Psoas muscle (tissue), 8 donors: ENCODE measurements at regions of chr5 and their contacts with region 1.

Region 1: GRCh38 chr5:146049014-146049703 is 56.2 kb downstream of the PLAC8L1 start:
- DNase-seq: no peak
- ATAC-seq: peak; percentile 55 to 83 (median 74)
- H3K4me3 ChIP-seq: no peak overlapping the region
- H3K27ac ChIP-seq: no peak overlapping the region
- H3K4me1 ChIP-seq: no peaks in the 10 kb centered on the region
- H3K27me3 ChIP-seq: peaks cover 0 to 4% (median 0%) of the 10 kb centered on the region in 3 donors
- CTCF ChIP-seq: peak; percentile 65

Region 2: DNA sequence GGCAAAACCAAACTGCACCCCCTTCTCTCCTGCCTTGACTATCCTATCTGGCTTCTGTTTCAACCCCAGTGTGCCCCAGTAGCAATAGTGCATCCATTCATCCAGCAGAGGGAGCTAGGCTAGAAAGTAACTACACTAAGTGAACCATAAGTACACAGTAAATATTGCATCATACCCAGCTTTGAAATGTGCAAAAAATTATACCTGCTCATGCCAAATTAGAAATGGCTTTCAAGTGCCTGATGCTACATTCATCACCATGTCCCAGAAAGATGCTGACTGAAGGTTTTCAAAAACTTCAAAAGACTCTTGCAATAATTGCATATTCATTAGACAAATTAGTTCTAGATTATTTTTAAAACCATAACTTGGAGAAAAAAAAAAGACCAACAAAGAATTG is 367.5 kb before region 1 on chr5:
- intact Hi-C with region 1: loop called (anchors 5 to 10 kb)
- DNase-seq: no peak
- ATAC-seq: peak; percentile 65 to 95 (median 84)
- H3K4me3 ChIP-seq: no peak overlapping the region
- H3K27ac ChIP-seq: no peak overlapping the region
- H3K4me1 ChIP-seq: peaks cover 8% of the 10 kb centered on the region
- H3K27me3 ChIP-seq: no peaks in the 10 kb centered on the region
- CTCF ChIP-seq: peak; percentile 65

Region 3: DNA sequence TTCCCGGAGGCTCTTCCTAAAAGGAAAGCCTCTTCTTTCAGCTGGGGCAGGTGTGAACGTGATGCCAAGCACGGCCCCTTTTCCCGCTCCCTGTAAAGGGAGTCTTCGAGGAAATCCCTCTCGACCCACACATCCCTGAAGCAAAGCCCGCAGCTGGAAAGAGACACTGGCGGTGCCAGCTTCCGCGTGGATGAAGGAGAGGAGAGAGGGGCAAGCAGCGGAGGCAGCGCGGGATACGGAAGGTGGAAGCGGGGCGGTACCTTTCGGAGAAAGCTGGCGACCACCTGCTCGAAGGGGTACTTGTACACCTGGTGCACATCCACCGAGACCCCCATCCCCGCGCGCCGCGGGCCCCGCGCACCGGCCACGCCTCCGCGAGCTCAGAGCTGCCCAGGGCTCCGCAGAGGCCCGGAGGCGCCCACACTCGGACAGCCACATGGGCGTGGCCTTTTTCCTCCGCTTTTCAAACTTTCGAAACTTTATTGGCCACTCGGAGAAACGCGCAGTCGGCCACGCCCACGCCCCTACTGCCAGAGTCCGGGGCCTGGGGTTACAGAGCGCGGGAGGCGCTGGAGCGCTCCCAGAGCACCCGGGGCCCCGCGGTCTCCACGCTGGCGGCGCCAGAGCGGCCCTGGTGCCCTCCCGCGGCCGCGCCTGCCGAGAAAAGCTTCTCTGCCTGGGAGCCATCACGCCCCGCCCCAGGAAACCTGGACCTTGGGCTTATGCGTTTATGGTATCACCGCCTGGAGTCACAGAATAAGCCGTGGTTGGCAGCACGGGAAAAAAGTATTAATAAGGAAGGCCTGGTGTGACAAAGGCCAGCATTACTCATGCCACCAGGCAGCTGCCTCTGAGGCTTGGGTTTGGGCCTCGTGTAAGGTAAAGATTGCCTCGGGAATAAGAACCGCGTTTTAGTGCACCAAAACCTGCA is 214.0 kb before region 1 on chr5 and contains the start of gene PRELID2:
- intact Hi-C with region 1: loop called (anchors 5 to 10 kb)
- DNase-seq: peak; percentile 89 to 91
- ATAC-seq: peak; percentile 91 to 96 (median 94)
- H3K4me3 ChIP-seq: peak within 1 kb of the TSS; percentile 83
- H3K27ac ChIP-seq: peak within 1 kb of the TSS; percentile 72
- H3K4me1 ChIP-seq: no peaks in the 10 kb centered on the region
- H3K27me3 ChIP-seq: no peaks in the 10 kb centered on the region
- CTCF ChIP-seq: no peak
- total RNA-seq, gene PRELID2: 1.3 to 3.0 (median 2.0) TPM

Region 4: DNA sequence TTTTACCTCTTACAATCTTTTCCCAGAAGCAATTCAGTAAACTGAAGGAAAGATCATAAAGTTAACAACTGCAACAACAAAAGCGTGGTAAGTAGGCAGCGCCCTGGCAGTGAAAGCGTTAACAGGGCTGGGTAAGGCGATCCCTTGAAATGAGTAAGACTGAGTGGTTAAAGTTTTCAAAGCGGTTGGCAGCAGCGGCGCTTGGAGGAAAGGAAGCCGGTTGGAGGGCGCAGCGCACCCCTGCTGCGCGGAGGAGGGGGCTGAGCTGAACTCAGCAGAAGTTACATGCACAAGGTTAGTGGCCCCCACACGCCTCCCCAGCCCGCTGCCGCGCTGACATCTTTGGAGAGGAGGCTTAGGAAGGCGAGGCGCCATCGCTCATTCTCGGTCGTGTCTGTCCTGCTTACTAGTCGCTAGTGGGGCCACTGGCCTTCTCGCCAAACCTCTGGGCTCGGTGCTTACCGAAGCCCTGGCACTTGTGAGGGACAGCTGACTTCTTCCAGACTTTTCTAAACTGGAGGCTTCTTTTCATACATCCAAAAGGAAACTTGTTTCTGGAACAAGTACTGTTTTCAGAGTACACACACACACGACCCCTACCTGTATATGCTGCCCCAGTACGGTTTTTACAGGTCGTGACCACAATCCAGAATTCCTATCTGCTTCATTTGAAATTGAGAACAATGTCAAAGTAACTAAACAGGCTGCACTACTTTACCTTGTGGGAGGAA is 112.6 kb before region 1 on chr5 and contains the start of gene SH3RF2:
- intact Hi-C with region 1: loop called (anchors 5 to 10 kb)
- DNase-seq: peak; percentile 54 to 81
- ATAC-seq: peak; percentile 82 to 89 (median 86)
- H3K4me3 ChIP-seq: peak within 1 kb of the TSS; percentile 64
- H3K27ac ChIP-seq: peak within 1 kb of the TSS; percentile 68
- H3K4me1 ChIP-seq: peaks cover 16% of the 10 kb centered on the region
- H3K27me3 ChIP-seq: no peaks in the 10 kb centered on the region
- CTCF ChIP-seq: no peak
- total RNA-seq, gene SH3RF2: 23.5 to 64.1 (median 38.2) TPM